AG04449 (cell line): ENCODE measurements at regions of chr15 and their contacts with region 1.

Region 1: GRCh38 chr15:52227456-52227855 is 36.3 kb upstream of the GNB5 start:
- DNase-seq: peak; percentile 61
- H3K4me3 ChIP-seq: no peak overlapping the region
- CTCF ChIP-seq: peak; percentile 88

Region 2: GRCh38 chr15:51935466-51936104 is 291.9 kb before region 1 on chr15:
- CTCF ChIA-PET with region 1: no interaction called
- POLR2A ChIA-PET with region 1: no interaction called
- DNase-seq: no peak
- H3K4me3 ChIP-seq: no peak overlapping the region
- CTCF ChIP-seq: no peak

Region 3: DNA sequence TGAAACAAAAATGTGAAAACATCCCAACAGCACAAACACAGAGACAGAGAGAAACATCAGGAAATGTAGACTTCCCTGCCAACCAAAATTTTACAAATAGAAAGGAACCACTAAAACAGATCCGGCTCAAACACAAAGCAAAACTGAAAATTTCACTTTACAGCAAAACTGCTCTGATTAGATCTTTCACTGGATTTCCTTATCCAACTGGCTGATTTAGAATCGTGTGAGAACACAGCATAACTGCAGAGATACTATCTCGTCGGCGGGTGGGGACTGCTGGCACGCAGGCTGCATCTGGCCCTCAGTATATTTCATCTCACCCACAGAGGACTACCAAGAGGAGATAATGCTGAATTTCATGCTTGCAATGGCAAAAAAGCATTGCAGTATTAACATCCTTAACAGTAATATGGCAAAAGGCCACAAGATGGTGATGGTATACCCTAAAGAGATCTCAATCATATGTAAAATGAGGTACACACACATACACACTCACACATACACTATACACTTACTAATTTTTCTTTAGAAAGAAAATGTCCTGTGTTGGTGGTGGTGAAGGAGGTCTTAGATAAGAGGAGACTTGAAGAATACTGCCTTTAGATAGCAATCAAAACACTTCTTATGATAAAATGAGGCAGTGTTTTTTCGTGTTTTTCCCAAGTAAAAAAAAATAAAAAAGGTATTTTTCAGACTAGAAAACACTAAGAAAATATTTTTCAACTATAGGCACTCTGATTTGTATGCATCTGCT is 245.3 kb before region 1 on chr15:
- CTCF ChIA-PET with region 1: interaction called, 18 read pairs
- POLR2A ChIA-PET with region 1: no interaction called
- DNase-seq: no peak
- H3K4me3 ChIP-seq: peak overlapping the region; percentile 18
- CTCF ChIP-seq: peak; percentile 39

Region 4: DNA sequence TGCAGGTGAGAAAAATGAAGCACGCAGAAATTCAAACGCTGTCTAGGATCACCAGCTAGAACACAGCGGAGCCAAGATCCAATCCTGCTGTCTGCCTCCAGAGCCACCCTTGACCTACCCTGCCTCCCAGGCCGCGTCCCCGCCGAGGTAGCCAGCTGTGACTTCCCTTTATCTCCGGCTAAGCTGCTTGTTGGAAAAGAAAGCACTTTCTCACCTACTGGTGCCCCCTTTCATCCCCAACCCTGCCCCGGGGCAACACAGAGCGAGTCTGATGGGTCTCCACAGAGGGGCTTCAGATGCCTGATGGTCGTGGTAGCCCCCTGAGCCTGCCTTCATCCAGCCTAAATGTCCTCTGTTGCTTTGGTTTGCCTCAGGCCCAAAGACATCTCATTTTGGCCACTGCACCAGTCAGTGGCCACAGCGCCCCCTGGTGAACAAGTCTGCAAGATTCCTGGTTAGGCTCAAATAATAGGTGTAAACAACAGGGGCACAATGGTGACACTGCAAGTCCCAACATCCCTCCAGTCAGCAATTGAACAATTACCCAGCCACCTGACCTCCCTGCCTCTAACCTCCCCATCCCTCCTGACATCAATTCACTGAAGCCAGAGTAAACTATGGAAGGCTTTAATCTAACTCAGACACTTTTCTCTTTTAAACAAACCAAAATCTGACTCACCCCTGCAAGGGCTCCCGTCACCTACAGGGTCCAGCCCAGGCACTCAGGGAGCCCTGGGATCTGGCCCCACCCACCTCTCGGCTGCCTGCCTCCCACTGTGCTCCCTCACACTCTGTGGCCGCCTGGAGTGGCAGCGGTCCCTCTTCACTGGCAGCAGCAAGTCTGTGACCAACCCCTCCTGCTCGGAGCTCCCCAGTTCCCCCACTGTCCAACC is 87.6 kb before region 1 on chr15:
- CTCF ChIA-PET with region 1: interaction called, 12 read pairs
- POLR2A ChIA-PET with region 1: no interaction called
- DNase-seq: no peak
- H3K4me3 ChIP-seq: no peak overlapping the region
- CTCF ChIP-seq: peak; percentile 73

Region 5: DNA sequence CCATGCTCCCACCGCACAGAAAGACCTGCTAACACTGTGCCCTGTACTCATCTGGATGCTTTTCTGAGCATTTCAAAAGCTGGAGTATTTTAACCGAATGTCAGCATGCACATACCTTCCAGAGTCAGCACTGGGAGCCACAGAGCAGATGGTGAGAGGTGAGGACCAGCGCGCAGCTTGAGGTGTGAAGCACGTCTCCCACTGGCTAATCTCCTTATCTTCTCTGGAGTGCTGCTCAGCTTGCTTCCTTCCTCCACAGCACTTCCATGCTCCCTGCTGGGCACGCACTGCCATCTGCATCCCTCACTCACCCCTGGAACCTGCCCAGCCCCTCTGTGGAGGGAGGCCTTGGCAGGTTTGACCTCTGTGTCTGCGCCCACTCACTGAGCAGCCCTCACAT is 36.2 kb before region 1 on chr15 and contains the start of gene GNB5:
- CTCF ChIA-PET with region 1: interaction called, 66 read pairs
- POLR2A ChIA-PET with region 1: no interaction called
- DNase-seq: no peak
- H3K4me3 ChIP-seq: no peak within 1 kb of the TSS
- CTCF ChIP-seq: no peak

Region 6: DNA sequence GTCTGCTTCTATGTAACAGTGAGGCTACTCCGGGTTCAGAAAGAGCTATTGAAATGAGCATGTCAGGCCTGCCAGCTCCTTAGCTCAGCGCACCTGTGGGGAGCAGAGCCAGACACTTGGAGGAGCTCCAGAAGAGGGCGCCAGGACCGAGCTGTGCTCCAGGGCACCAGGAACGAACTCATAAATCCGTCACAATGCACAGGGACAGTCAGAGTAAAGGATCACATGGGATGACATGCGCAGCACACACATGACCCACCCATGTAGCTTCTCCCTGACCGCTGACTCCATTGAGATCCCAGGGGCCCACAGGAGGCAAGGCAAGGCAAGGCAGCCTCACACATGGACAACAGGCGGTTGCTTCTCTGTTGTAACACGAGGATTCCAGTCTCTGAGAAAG is 10.3 kb before region 1 on chr15:
- CTCF ChIA-PET with region 1: interaction called, 25 read pairs
- POLR2A ChIA-PET with region 1: no interaction called
- DNase-seq: no peak
- H3K4me3 ChIP-seq: no peak overlapping the region
- CTCF ChIP-seq: no peak

Region 7: GRCh38 chr15:52295421-52296001 is 68.1 kb after region 1 on chr15 and contains the start of gene MYO5C:
- CTCF ChIA-PET with region 1: no interaction called
- POLR2A ChIA-PET with region 1: no interaction called
- DNase-seq: no peak
- H3K4me3 ChIP-seq: peak within 1 kb of the TSS; percentile 42
- CTCF ChIP-seq: no peak

Region 8: GRCh38 chr15:52392008-52392687 is 164.7 kb after region 1 on chr15:
- CTCF ChIA-PET with region 1: no interaction called
- POLR2A ChIA-PET with region 1: no interaction called
- DNase-seq: peak; percentile 26
- H3K4me3 ChIP-seq: no peak overlapping the region
- CTCF ChIP-seq: no peak